ENCODE measurements at regions of chr16 and their contacts with region 1.

Region 1: GRCh38 chr16:69465083-69465721 is 40.8 kb downstream of the CYB5B start:
- DNase-seq: no peak
- ATAC-seq: peak; percentile 44
- H3K4me3 ChIP-seq: no peak overlapping the region
- H3K27ac ChIP-seq: no peak overlapping the region
- H3K4me1 ChIP-seq: peaks cover 21% of the 10 kb centered on the region
- H3K27me3 ChIP-seq: no peaks in the 10 kb centered on the region
- CTCF ChIP-seq: peak; percentile 35; the same call in 1 of the 2 replicates

Region 2: GRCh38 chr16:69186642-69187445 is 278.4 kb before region 1 on chr16 and contains the start of gene SNTB2:
- CTCF ChIA-PET with region 1: no interaction called
- POLR2A ChIA-PET with region 1: no interaction called
- intact Hi-C with region 1: no loop called
- DNase-seq: peak; percentile 94
- ATAC-seq: peak; percentile 76
- H3K4me3 ChIP-seq: peak within 1 kb of the TSS; percentile 79
- H3K27ac ChIP-seq: peak within 1 kb of the TSS; percentile 43
- H3K4me1 ChIP-seq: peaks cover 46% of the 10 kb centered on the region
- H3K27me3 ChIP-seq: no peaks in the 10 kb centered on the region
- CTCF ChIP-seq: no peak
- total RNA-seq, gene SNTB2: 40.4 and 62.6 TPM in 2 replicates

Region 3: DNA sequence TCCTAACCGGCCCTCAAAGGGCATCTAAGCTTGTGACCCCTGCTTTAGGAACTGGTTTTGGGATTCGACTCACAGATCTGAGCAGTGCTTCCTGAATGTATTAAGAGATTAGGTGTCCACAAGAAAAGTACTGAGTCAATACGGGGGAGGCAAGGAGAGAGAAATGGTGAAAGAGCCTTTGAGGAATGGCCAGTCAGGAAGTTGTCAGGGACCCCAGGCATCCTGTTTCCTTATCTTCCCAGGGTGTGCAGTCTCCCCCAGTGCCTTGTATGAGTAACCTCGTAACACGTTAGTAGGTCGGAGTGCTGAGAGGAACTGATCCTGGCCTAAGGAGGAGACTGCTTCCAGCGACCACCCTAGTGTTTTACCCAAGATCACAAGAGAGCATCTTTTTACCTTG is 97.2 kb before region 1 on chr16:
- CTCF ChIA-PET with region 1: no interaction called
- POLR2A ChIA-PET with region 1: no interaction called
- intact Hi-C with region 1: no loop called
- DNase-seq: no peak
- ATAC-seq: no peak
- H3K4me3 ChIP-seq: no peak overlapping the region
- H3K27ac ChIP-seq: no peak overlapping the region
- H3K4me1 ChIP-seq: no peaks in the 10 kb centered on the region
- H3K27me3 ChIP-seq: no peaks in the 10 kb centered on the region
- CTCF ChIP-seq: no peak

Region 4: GRCh38 chr16:69417520-69418199 is 47.5 kb before region 1 on chr16:
- CTCF ChIA-PET with region 1: no interaction called
- POLR2A ChIA-PET with region 1: no interaction called
- intact Hi-C with region 1: loop called (anchors 5 kb)
- DNase-seq: peak; percentile 70
- ATAC-seq: peak; percentile 88
- H3K4me3 ChIP-seq: peak overlapping the region; percentile 36; the same call in 1 of the 2 replicates
- H3K27ac ChIP-seq: peak overlapping the region; percentile 89
- H3K4me1 ChIP-seq: peaks cover 12% of the 10 kb centered on the region
- H3K27me3 ChIP-seq: no peaks in the 10 kb centered on the region
- CTCF ChIP-seq: no peak

Region 5: GRCh38 chr16:69535123-69536050 is 70.2 kb after region 1 on chr16:
- CTCF ChIA-PET with region 1: no interaction called
- POLR2A ChIA-PET with region 1: no interaction called
- intact Hi-C with region 1: loop called (anchors 10 kb)
- DNase-seq: no peak
- ATAC-seq: no peak
- H3K4me3 ChIP-seq: no peak overlapping the region
- H3K27ac ChIP-seq: no peak overlapping the region
- H3K4me1 ChIP-seq: peaks cover 8% of the 10 kb centered on the region
- H3K27me3 ChIP-seq: no peaks in the 10 kb centered on the region
- CTCF ChIP-seq: no peak

Region 6: GRCh38 chr16:69565671-69566239 is 100.6 kb after region 1 on chr16 and contains the start of gene NFAT5:
- CTCF ChIA-PET with region 1: no interaction called
- POLR2A ChIA-PET with region 1: no interaction called
- intact Hi-C with region 1: loop called (anchors 5 kb)
- DNase-seq: peak; percentile 82
- ATAC-seq: peak; percentile 79
- H3K4me3 ChIP-seq: peak within 1 kb of the TSS; percentile 88
- H3K27ac ChIP-seq: peak within 1 kb of the TSS; percentile 81
- H3K4me1 ChIP-seq: peaks cover 23% of the 10 kb centered on the region
- H3K27me3 ChIP-seq: no peaks in the 10 kb centered on the region
- CTCF ChIP-seq: no peak
- total RNA-seq, gene NFAT5: 11.4 and 14.3 TPM in 2 replicates